Activated CD8-positive, alpha-beta T cell treated with anti-CD3 and anti-CD28 coated beads for 36 hours (primary cell): ENCODE measurements at regions of chr1 and their contacts with region 1.

Region 1: DNA sequence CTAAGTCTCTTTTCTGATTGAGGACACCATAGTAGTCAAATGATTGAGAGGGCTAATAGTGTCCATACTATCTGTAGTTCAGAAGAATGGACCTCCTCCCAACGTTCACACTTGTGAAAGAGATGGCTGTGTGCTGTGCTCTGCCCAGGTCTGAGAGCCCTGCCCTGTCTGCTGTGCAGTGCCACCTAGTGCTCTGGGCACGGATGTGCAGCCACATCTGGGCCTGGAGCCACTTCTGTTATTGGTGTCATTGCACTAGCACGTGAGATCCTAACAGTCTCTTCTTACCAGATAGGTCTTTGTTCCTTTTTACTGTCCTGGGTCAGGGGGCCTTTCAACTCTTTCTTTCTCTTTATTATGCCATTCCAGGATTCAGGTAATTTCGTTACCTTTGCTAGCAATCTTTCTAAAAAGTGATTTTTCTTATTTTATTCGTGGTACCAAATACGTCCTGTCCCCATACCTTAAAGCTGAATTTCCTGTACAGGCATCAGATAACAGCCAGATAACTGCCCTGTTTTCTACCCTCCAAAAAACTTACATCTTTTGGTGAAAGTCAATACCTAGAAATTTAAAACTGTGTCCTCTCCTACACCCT is 21.7 kb downstream of the INTS3 start:
- DNase-seq: peak; percentile 86
- ATAC-seq: peak; percentile 100
- H3K4me3 Mint-ChIP-seq: no peak overlapping the region
- H3K27ac Mint-ChIP-seq: no peak overlapping the region
- H3K4me1 Mint-ChIP-seq: peaks cover 5% of the 10 kb centered on the region
- H3K27me3 Mint-ChIP-seq: no peaks in the 10 kb centered on the region
- CTCF ChIP-seq: peak; percentile 91

Region 2: GRCh38 chr1:153670859-153671627 is 78.5 kb before region 1 on chr1 and contains the start of gene ILF2:
- CTCF ChIA-PET with region 1: interaction called, 40 read pairs
- POLR2A ChIA-PET with region 1: no interaction called
- intact Hi-C with region 1: loop called (anchors 5 kb)
- DNase-seq: peak; percentile 99
- ATAC-seq: peak; percentile 90
- H3K4me3 Mint-ChIP-seq: no peak within 1 kb of the TSS
- H3K27ac Mint-ChIP-seq: no peak within 1 kb of the TSS
- H3K4me1 Mint-ChIP-seq: peaks cover 26% of the 10 kb centered on the region
- H3K27me3 Mint-ChIP-seq: no peaks in the 10 kb centered on the region
- CTCF ChIP-seq: no peak
- total RNA-seq, gene ILF2: 328 to 333 TPM

Region 3: GRCh38 chr1:153677718-153678505 is 71.6 kb before region 1 on chr1:
- CTCF ChIA-PET with region 1: interaction called, 40 read pairs
- POLR2A ChIA-PET with region 1: interaction called, 3 read pairs
- intact Hi-C with region 1: loop called (anchors 5 kb)
- DNase-seq: peak; percentile 59
- ATAC-seq: peak; percentile 78
- H3K4me3 Mint-ChIP-seq: peak overlapping the region; percentile 65
- H3K27ac Mint-ChIP-seq: no peak overlapping the region
- H3K4me1 Mint-ChIP-seq: peaks cover 21% of the 10 kb centered on the region
- H3K27me3 Mint-ChIP-seq: peaks cover 41% of the 10 kb centered on the region
- CTCF ChIP-seq: peak; percentile 91

Region 4: DNA sequence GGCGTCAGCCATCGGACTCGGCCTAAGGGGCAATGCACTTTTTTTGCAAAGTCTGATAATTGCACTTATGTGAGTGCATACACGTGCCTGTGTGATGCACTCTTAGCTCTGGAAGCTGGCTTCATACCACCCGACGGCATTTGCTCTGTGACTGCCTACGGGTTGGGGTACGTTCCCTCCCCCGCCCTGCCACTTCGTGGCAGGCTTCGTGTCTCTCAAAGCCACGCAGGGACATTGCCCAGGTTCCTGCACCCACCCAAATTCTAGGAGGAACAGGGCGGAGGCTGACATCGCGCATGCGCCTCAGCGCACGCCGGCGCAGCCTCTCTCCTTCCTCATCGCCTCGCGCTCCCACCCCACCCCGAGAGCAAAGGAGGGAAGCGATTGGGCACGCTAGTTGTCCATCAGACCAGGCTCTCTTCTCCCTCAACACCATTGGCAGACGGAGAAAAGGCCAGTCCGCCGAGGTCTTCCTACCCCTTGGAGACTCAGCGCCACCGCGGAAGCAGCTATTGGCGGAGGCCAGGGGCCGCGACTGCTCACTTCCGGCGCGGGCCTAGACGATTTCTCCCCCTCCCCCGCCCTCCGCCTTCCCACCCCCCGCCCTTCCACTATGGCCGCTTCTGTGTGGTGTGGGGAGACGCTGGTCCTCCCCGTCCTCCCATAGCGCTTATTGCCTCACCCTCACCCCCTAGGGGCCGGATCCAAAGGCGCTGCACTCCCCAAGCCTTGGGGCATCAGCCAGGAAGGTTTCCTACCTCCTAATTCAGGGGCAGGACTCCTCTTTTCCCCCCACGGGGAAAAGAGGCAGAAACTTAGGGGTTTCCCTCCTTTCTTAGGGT is 21.8 kb before region 1 on chr1 and contains the start of gene INTS3:
- CTCF ChIA-PET with region 1: interaction called, 27 read pairs
- POLR2A ChIA-PET with region 1: interaction called, 3 read pairs
- intact Hi-C with region 1: no loop called
- DNase-seq: peak; percentile 100
- ATAC-seq: peak; percentile 100
- H3K4me3 Mint-ChIP-seq: peak within 1 kb of the TSS; percentile 90
- H3K27ac Mint-ChIP-seq: peak within 1 kb of the TSS; percentile 93
- H3K4me1 Mint-ChIP-seq: peaks cover 39% of the 10 kb centered on the region
- H3K27me3 Mint-ChIP-seq: no peaks in the 10 kb centered on the region
- CTCF ChIP-seq: no peak
- total RNA-seq, gene INTS3: 45.0 to 45.5 TPM

Region 5: DNA sequence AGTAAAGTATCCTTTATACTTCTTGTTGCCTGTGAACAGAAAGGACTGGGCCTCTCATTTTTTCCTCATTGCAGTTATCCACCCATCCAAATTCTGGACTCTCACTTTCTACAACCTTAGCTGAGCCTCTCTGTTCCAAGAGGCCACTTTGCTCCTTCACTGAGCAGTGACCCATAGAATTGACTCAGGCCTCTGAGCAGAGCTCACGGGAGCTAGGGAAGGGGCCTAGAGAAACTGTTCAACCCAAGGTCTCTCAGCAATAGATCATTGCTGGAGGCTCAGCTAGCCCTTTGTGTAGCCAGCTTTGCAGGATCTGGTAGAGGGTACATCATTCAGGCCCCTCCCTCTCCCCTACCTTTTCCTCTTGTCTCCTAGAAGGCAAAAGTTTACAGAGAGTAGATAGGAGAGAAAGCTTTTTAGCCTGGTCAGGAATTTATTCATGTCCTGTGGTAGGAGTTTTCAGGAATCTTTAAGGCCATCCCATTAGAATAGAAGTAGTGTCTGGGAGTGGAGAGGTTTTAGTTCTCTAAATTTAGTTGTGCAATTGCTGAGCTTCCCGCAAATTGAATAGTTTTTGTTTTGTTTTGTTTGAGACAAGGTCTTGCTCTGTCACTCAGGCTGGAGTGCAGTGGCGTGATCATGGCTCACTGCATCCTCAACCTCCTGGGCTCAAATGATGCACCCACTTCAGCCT is 15.0 kb before region 1 on chr1:
- CTCF ChIA-PET with region 1: interaction called, 27 read pairs
- POLR2A ChIA-PET with region 1: interaction called, 3 read pairs
- intact Hi-C with region 1: no loop called
- DNase-seq: no peak
- ATAC-seq: no peak
- H3K4me3 Mint-ChIP-seq: no peak overlapping the region
- H3K27ac Mint-ChIP-seq: no peak overlapping the region
- H3K4me1 Mint-ChIP-seq: peaks cover 23% of the 10 kb centered on the region
- H3K27me3 Mint-ChIP-seq: no peaks in the 10 kb centered on the region
- CTCF ChIP-seq: no peak

Region 6: DNA sequence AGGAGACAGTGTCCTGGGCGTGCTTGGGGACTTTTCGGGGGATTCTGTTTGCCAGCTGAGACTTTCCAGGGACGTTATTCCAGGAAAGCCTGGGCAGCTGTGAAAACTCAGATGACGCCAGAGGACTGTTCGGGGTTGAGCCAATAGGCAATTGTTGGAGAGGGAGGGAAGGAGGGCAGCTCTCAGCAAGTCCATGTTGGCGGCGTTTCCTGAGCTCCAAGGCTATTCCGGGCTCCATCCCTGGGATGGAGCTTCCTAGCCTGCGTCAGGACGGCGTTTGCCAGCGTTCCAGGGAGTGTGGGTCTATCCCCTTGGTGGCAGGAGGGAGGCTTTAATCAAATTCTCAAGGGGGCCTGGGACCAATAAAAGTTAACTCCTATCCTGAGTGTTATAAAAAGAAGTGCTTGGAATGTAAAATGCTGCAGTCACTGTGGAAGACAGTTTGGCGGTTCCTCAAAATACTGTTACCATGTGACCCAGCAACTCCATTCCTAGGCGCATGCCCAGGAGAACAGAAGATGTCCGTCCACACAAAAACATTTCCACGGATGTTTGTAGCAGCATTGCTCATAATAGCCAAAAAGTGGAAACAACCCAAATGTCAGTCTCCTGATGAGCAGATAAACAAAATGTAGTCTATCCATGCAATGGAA is 40.9 kb after region 1 on chr1:
- CTCF ChIA-PET with region 1: no interaction called
- POLR2A ChIA-PET with region 1: no interaction called
- intact Hi-C with region 1: no loop called
- DNase-seq: no peak
- ATAC-seq: no peak
- H3K4me3 Mint-ChIP-seq: peak overlapping the region; percentile 43
- H3K27ac Mint-ChIP-seq: peak overlapping the region; percentile 80
- H3K4me1 Mint-ChIP-seq: peaks cover 33% of the 10 kb centered on the region
- H3K27me3 Mint-ChIP-seq: peaks cover 2% of the 10 kb centered on the region
- CTCF ChIP-seq: no peak